ENCODE measurements at regions of chr2 and their contacts with region 1.

Region 1: DNA sequence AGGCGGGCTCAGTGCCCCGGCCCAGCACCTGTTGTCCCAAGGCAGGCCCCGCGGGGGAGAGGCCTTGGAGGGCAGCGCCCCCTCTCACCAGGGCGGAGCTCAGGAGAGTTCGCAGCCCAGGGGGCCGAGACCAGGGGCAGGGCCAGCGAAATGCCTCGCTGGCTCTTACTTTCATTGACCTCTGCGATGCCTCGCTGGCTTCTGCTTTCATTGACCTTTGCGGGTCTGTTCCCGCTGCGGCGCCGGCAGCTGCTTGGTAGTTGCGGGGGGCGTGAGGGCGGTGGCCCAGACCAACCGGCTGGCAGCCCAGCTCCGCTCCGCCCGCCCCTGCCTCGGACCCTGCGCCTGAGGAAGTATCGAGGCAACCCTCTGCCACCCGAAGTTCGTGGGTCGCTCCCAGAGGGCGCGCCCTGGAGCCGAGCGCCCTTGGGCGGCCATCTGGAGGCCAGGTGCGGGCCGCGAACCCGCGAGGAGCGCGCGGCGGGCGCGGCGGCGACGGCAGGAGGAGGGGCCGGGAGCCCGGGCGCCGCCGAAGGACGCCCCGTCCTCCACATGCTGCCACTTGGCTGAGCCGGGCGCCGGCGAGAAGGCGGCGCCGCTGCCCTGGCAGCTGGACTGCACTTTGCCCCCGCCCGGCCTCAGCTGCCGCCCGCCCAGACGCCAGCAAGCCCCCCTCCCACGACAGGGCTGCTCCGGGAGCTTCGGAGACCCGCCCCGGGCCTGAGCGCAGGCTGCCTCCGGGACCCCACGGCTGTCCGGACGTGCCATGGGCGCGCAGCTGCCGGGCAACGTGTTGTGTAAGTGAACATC is 118.0 kb upstream of the MSTN start:
- DNase-seq: peak; percentile 71 to 84
- ATAC-seq: peak; percentile 89 to 94 (median 93)
- H3K4me3 ChIP-seq: peak overlapping the region; percentile 88
- H3K27ac ChIP-seq: peak overlapping the region; percentile 90
- H3K4me1 ChIP-seq: peaks cover 15% of the 10 kb centered on the region
- H3K27me3 ChIP-seq: no peaks in the 10 kb centered on the region
- CTCF ChIP-seq: peak; percentile 60

Region 2: GRCh38 chr2:190105554-190105953 is 75.0 kb before region 1 on chr2:
- intact Hi-C with region 1: loop called in 1 of 2 experiments (anchors 5 kb)
- DNase-seq: no peak
- ATAC-seq: no peak
- H3K4me3 ChIP-seq: no peak overlapping the region
- H3K27ac ChIP-seq: no peak overlapping the region
- H3K4me1 ChIP-seq: peaks cover 25% of the 10 kb centered on the region
- H3K27me3 ChIP-seq: no peaks in the 10 kb centered on the region
- CTCF ChIP-seq: no peak

Region 3: GRCh38 chr2:190369635-190370034 is 189.1 kb after region 1 on chr2:
- intact Hi-C with region 1: loop called in 1 of 2 experiments (anchors 5 kb)
- DNase-seq: no peak
- ATAC-seq: no peak
- H3K4me3 ChIP-seq: no peak overlapping the region
- H3K27ac ChIP-seq: no peak overlapping the region
- H3K4me1 ChIP-seq: no peaks in the 10 kb centered on the region
- H3K27me3 ChIP-seq: no peaks in the 10 kb centered on the region
- CTCF ChIP-seq: no peak

Measured in psoas muscle (tissue), 8 donors.